Mammary epithelial cell (primary cell): ENCODE measurements at regions of chr6 and their contacts with region 1.

Region 1: DNA sequence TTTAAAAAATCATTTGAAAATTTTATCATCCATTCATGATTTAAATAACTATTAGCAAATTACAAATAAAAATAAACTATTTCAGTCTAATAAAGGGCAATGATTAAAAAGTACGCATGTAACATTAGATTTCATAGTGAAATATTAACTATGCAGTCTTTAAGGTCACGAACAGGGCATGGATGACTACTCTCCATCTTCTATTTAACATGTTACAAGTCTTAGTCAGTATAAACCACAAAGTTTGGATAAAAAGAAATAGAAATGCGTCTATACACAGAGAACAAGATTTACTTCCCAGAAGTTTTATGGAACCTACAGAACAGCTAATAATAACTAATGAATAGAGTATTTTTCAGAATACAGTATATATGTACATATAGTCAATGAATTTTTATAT is 1016.0 kb downstream of the EYS start:
- DNase-seq: no peak
- H3K4me3 ChIP-seq: no peak overlapping the region
- H3K27ac ChIP-seq: no peak overlapping the region
- H3K4me1 ChIP-seq: no peaks in the 10 kb centered on the region
- H3K27me3 ChIP-seq: no peaks in the 10 kb centered on the region
- CTCF ChIP-seq: no peak

Region 2: DNA sequence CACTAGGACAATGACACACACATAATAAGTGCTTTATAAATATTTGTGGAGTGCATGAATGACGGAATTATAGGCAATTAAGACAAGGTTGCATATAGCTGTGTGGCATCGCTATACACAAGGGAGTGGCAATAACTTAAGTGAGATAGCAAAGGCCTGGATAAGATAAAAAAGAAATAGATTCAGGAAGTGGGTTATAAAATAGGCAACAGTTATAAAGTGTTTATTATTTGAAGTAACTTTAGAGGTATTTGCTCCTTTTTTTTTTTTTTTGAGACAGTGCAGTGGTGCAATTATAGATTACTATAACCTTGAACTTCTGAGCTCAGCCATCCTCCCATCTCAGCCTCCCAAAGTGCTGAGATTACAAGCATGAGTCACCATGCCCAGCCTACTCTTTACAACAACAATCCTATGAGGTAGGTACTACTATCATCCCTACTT is 1194.7 kb before region 1 on chr6:
- CTCF ChIA-PET with region 1: interaction called, 20 read pairs
- dilution Hi-C with region 1: no loop called
- in situ Hi-C with region 1: no loop called
- intact Hi-C with region 1: no loop called
- DNase-seq: no peak
- H3K4me3 ChIP-seq: no peak overlapping the region
- H3K27ac ChIP-seq: no peak overlapping the region
- H3K4me1 ChIP-seq: no peaks in the 10 kb centered on the region
- H3K27me3 ChIP-seq: no peaks in the 10 kb centered on the region
- CTCF ChIP-seq: no peak

Region 3: DNA sequence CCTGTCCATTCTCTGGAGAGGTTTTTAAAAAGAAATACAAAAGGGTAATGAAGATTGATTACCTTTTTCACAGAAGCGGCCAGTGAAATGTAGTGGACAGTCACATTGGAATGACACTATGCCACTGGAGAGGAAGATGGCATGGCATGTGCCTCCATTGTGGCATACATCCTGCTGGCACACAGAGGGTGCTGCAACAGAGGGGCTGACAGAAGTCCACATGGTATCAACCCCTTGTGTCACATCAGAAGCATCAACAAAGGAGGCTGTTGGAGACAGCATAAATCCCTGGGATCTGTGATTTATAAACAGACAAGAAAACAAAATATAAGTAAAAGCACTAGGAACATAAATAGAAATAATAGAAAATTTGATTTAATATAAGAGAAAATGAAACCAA is 460.5 kb before region 1 on chr6:
- CTCF ChIA-PET with region 1: no interaction called
- dilution Hi-C with region 1: no loop called
- in situ Hi-C with region 1: no loop called
- intact Hi-C with region 1: no loop called
- DNase-seq: no peak
- H3K4me3 ChIP-seq: no peak overlapping the region
- H3K27ac ChIP-seq: no peak overlapping the region
- H3K4me1 ChIP-seq: no peaks in the 10 kb centered on the region
- H3K27me3 ChIP-seq: no peaks in the 10 kb centered on the region
- CTCF ChIP-seq: no peak

Region 4: DNA sequence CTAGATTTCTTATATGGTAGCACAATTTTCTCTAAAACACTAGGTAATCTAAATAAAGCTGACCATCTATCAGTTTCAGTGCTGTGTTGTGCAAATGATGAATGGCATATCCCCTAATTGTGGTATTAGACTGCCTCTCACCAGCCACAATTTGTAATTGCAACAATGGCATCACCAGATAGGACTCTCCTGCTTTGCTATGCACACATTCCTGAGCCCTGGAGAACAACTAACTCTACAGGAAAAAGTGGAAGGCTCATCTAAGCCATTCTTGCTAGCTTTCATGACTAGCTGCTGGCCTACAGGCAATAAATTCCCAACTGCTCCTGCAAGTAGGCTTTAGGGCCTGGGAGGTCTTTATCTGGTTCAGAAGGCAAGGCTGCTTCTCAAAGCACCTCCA is 41.8 kb after region 1 on chr6:
- CTCF ChIA-PET with region 1: no interaction called
- dilution Hi-C with region 1: no loop called
- in situ Hi-C with region 1: no loop called
- intact Hi-C with region 1: no loop called
- DNase-seq: peak; percentile 8
- H3K4me3 ChIP-seq: no peak overlapping the region
- H3K27ac ChIP-seq: no peak overlapping the region
- H3K4me1 ChIP-seq: no peaks in the 10 kb centered on the region
- H3K27me3 ChIP-seq: no peaks in the 10 kb centered on the region
- CTCF ChIP-seq: peak; percentile 24 to 44